Aorta (tissue), 5 donors: ENCODE measurements at regions of chr3 and their contacts with region 1.

Region 1: GRCh38 chr3:58025837-58026569 is 17.8 kb downstream of the FLNB start:
- DNase-seq: peak; percentile 63 to 83
- ATAC-seq: peak; percentile 41
- H3K4me3 ChIP-seq: no peak overlapping the region
- H3K27ac ChIP-seq: peak overlapping the region; percentile 58 to 70
- H3K4me1 ChIP-seq: peaks cover 0 to 5% of the 10 kb centered on the region in 2 donors
- H3K27me3 ChIP-seq: no peaks in the 10 kb centered on the region

Region 2: DNA sequence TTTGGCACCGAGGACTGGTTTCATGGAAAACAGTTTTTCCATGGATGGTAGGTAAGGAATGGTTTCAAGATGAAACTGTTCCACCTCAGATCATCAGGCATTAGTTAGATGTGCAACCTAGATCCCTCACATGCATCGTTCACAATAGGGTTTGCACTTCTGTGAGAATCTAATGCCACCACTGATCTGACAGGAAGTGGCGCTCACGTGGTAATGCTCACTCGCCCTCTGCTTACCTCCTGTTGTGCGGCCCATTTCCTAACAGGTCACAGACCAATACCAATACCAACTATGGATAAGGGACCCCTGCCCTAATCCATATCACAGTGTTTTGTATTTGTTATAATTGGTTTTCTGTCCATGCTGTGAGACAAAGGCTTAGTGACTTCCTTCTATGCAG is 211.0 kb before region 1 on chr3:
- intact Hi-C with region 1: no loop called
- DNase-seq: no peak
- ATAC-seq: no peak
- H3K4me3 ChIP-seq: no peak overlapping the region
- H3K27ac ChIP-seq: no peak overlapping the region
- H3K4me1 ChIP-seq: peaks cover 0 to 6% of the 10 kb centered on the region in 2 donors
- H3K27me3 ChIP-seq: no peaks in the 10 kb centered on the region

Region 3: GRCh38 chr3:58084788-58085543 is 59.0 kb after region 1 on chr3:
- intact Hi-C with region 1: no loop called
- DNase-seq: no peak
- ATAC-seq: no peak
- H3K4me3 ChIP-seq: no peak overlapping the region
- H3K27ac ChIP-seq: no peak overlapping the region
- H3K4me1 ChIP-seq: peaks cover 0 to 7% of the 10 kb centered on the region in 2 donors
- H3K27me3 ChIP-seq: no peaks in the 10 kb centered on the region

Region 4: GRCh38 chr3:58116161-58116955 is 90.4 kb after region 1 on chr3:
- intact Hi-C with region 1: loop called in 1 of 2 experiments (anchors 5 kb)
- DNase-seq: no peak
- ATAC-seq: no peak
- H3K4me3 ChIP-seq: no peak overlapping the region
- H3K27ac ChIP-seq: no peak overlapping the region
- H3K4me1 ChIP-seq: peaks cover 5 to 6% of the 10 kb centered on the region in 2 donors
- H3K27me3 ChIP-seq: no peaks in the 10 kb centered on the region

Region 5: DNA sequence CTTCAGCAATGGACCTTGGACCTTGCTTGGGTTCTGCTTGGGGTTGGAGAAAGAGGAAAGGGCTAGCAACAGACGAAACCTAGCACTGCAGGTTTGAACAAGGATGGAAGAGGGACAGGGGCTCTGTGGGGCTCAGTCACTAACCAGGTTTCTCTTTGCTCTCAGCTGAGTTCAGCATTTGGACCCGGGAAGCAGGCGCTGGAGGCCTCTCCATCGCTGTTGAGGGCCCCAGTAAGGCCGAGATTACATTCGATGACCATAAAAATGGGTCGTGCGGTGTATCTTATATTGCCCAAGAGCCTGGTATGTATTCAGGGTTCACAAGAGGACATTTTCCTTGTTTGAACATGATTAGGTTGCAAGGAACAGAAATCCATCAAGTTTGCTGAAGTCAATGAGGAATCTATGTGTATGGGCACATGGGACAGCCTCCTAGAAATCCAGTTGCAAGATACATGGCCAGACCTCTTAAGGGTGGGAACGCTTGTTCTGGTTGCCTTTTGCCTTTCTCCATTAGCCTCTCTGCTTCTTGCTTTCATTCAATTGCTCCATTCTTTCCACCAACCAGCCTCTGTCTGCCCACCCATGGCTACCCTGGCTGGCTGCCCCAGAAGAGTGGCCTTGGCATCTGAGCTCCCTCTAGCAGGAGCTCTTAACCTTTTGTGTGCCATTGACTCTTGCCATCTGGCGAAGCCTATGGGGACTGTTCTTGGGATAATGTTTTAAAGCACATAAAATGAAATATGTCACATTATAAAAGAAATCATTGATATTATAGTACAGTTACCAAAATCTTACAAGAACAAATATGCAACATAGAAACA is 128.8 kb after region 1 on chr3:
- intact Hi-C with region 1: loop called in 1 of 2 experiments (anchors 5 kb)
- DNase-seq: no peak
- ATAC-seq: no peak
- H3K4me3 ChIP-seq: no peak overlapping the region
- H3K27ac ChIP-seq: no peak overlapping the region
- H3K4me1 ChIP-seq: no peaks in the 10 kb centered on the region
- H3K27me3 ChIP-seq: no peaks in the 10 kb centered on the region